HCT116 (cell line): ENCODE measurements at regions of chr5 and their contacts with region 1.

Region 1: DNA sequence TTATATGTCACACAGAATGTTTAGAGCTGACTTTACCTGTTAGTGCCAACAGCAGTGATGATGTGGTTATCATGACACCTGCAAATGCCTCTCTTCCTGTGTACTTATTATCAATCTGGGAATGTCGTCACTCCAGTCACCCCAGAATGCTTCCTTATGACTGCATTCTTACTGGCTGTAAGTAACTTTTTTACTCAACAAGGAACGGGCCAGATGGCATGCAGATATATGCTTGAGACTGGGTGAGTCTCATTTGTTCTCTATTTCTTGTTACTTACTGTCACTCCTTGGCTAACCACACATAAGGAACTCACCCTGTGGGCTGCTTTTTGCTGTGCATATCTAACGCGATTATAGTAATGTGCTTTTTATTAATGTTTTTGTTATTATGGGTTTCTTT is 385.5 kb upstream of the MEF2C start:
- DNase-seq: no peak
- ATAC-seq: no peak
- H3K4me3 ChIP-seq: no peak overlapping the region
- H3K27ac ChIP-seq: no peak overlapping the region
- H3K4me1 ChIP-seq: no peaks in the 10 kb centered on the region
- H3K27me3 ChIP-seq: no peaks in the 10 kb centered on the region
- CTCF ChIP-seq: no peak
- POLR2A ChIP-seq: no peak
- RAD21 ChIP-seq: no peak

Region 2: DNA sequence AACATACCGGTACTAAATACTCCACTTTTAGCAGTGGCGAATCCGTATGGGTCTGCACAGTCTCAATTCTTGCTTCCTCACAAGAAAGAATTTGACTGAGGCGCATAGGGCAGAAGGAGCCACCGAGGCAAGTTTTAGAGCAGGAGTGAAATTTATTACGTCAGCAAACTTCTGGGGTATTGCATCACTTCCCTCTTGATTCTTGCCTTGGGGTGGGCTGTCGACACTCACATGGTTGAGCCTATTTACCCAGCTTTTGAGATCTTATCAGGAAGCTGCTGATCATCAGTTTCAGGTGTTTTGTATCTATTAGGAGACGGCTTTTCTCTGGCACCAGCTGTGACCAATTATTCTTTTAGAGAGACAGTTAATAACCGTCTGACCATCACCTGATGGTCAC is 1744.2 kb before region 1 on chr5:
- CTCF ChIA-PET with region 1: no interaction called
- POLR2A ChIA-PET with region 1: no interaction called
- RAD21 ChIA-PET with region 1: no interaction called
- intact Hi-C with region 1: loop called (anchors 5 kb)
- DNase-seq: no peak
- ATAC-seq: no peak
- H3K4me3 ChIP-seq: no peak overlapping the region
- H3K27ac ChIP-seq: no peak overlapping the region
- H3K4me1 ChIP-seq: no peaks in the 10 kb centered on the region
- H3K27me3 ChIP-seq: no peaks in the 10 kb centered on the region
- CTCF ChIP-seq: no peak
- POLR2A ChIP-seq: no peak
- RAD21 ChIP-seq: no peak

Region 3: GRCh38 chr5:88925692-88926490 is 342.6 kb before region 1 on chr5:
- CTCF ChIA-PET with region 1: no interaction called
- POLR2A ChIA-PET with region 1: no interaction called
- RAD21 ChIA-PET with region 1: no interaction called
- intact Hi-C with region 1: no loop called
- DNase-seq: no peak
- ATAC-seq: no peak
- H3K4me3 ChIP-seq: no peak overlapping the region
- H3K27ac ChIP-seq: no peak overlapping the region
- H3K4me1 ChIP-seq: no peaks in the 10 kb centered on the region
- H3K27me3 ChIP-seq: no peaks in the 10 kb centered on the region
- CTCF ChIP-seq: no peak
- POLR2A ChIP-seq: no peak
- RAD21 ChIP-seq: no peak

Region 4: DNA sequence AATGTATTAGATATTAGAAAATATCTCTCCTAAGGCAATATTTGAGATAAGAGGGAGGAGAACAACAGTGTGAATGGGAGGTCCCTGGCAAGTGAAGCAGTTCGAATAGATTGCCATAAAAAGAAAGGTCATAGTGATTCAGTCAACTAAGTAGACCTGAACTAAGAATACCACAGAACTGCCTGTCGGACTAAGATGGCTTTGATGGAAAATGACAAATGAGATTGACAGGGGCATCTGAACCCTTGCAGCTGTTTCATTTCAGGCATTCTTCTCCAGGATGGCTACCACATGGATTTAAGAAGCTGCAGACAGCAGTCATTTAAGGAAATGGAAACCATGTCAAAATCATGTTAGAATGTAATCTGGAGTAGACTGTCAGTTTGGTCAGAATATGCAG is 77.1 kb before region 1 on chr5:
- CTCF ChIA-PET with region 1: no interaction called
- POLR2A ChIA-PET with region 1: no interaction called
- RAD21 ChIA-PET with region 1: no interaction called
- intact Hi-C with region 1: no loop called
- DNase-seq: no peak
- ATAC-seq: no peak
- H3K4me3 ChIP-seq: no peak overlapping the region
- H3K27ac ChIP-seq: no peak overlapping the region
- H3K4me1 ChIP-seq: no peaks in the 10 kb centered on the region
- H3K27me3 ChIP-seq: no peaks in the 10 kb centered on the region
- CTCF ChIP-seq: no peak
- POLR2A ChIP-seq: no peak
- RAD21 ChIP-seq: no peak